ENCODE measurements at regions of chr19 and their contacts with region 1.

Region 1: GRCh38 chr19:30682999-30683536 is 310.9 kb downstream of the ZNF536 start:
- DNase-seq: peak in 2 of 3 donors; percentile 74 to 76
- ATAC-seq: peak; percentile 77
- H3K4me3 ChIP-seq: no peak overlapping the region
- H3K4me1 ChIP-seq: no peaks in the 10 kb centered on the region
- CTCF ChIP-seq: peak; percentile 73

Region 2: GRCh38 chr19:32224371-32225244 is 1541.5 kb after region 1 on chr19:
- intact Hi-C with region 1: loop called in 1 of 2 experiments (anchors 10 kb)
- DNase-seq: peak in 2 of 3 donors; percentile 64 to 74
- ATAC-seq: peak; percentile 95
- H3K4me3 ChIP-seq: no peak overlapping the region
- H3K4me1 ChIP-seq: no peaks in the 10 kb centered on the region
- CTCF ChIP-seq: peak; percentile 99